ENCODE measurements at regions of chr3 and their contacts with region 1.

Region 1: DNA sequence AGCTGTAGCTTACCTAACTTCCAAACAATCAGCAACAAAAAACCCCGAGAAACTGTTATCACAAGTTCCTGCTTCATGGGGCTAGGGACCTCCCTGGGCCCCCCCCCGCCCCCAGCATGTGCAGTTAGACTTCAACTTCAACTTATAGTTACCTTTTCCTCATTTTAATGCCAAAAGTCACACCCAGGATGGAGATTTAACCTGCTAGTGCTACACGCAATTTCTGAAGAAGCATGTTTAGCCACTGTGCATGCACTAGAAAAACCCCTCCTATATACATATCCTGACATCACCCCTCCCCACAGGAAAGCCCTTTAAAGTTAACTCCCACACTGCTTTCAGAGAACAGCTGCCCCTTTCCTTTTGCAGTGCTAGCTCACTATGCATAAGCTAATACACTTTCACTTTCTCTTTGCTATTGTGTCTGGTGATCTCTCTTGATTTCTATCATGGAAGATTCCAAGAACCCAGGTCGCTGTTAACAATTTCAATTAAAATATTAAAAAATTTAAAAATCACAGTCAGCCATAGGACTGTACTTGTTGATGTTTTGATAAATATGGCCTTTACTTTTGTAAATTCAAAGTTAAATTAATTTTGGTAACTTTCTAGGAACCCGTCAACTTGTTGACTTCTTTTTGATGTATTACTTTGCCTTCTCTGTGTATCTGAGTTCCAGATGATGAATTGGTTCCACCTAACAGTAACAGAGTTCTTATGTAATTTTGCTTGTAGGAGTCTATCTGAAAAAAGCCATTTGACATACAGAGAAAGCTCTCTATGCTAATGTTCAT is 75.2 kb upstream of the ACAD9 start:
- DNase-seq: peak in 8 of 9 donors; percentile 54 to 88 (median 84)
- ATAC-seq: peak; percentile 92
- H3K4me3 ChIP-seq: peak overlapping the region; percentile 49
- H3K4me3 Mint-ChIP-seq: peak overlapping the region; percentile 48 to 89 (median 80)
- H3K27ac ChIP-seq: peak overlapping the region; percentile 74
- H3K27ac Mint-ChIP-seq: peak overlapping the region; percentile 91 to 98 (median 96)
- H3K4me1 ChIP-seq: peaks cover 22 to 64% of the 10 kb centered on the region in 2 donors
- H3K4me1 Mint-ChIP-seq: peaks cover 59 to 91% (median 85%) of the 10 kb centered on the region in 7 donors
- H3K27me3 ChIP-seq: no peaks in the 10 kb centered on the region
- H3K27me3 Mint-ChIP-seq: no peaks in the 10 kb centered on the region

Region 2: DNA sequence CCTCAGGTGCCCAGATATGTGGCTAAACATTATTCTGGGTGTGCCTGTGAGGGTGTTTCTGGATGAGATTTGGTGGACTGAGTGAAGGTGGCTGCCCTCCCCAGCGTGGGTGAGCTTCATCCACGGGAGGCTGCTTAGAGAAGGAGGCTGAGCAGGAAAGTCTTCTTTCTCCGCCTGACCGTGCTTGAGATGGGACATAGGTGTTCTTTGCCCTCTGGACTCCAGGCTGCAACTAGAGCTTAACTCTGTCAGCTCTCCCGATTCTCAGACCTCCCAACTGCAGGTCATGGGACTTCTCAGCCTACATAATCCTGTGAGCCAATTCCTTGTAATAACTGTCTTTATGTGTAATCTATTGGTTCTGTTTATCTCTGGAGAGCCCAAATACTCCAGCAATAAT is 44.2 kb before region 1 on chr3:
- CTCF ChIA-PET with region 1: no interaction called
- POLR2A ChIA-PET with region 1: no interaction called
- intact Hi-C with region 1: no loop called
- DNase-seq: no peak
- ATAC-seq: no peak
- H3K4me3 ChIP-seq: no peak overlapping the region
- H3K4me3 Mint-ChIP-seq: peak overlapping the region in 4 of 10 donors; percentile 12 to 47 (median 38)
- H3K27ac ChIP-seq: no peak overlapping the region
- H3K27ac Mint-ChIP-seq: peak overlapping the region in 6 of 9 donors; percentile 43 to 79 (median 74)
- H3K4me1 ChIP-seq: peaks cover 14 to 16% of the 10 kb centered on the region in 2 donors
- H3K4me1 Mint-ChIP-seq: peaks cover 41 to 82% (median 70%) of the 10 kb centered on the region in 7 donors
- H3K27me3 ChIP-seq: no peaks in the 10 kb centered on the region
- H3K27me3 Mint-ChIP-seq: no peaks in the 10 kb centered on the region

Region 3: GRCh38 chr3:128922804-128923459 is 118.7 kb after region 1 on chr3:
- CTCF ChIA-PET with region 1: no interaction called
- POLR2A ChIA-PET with region 1: interaction called, 4 read pairs
- intact Hi-C with region 1: loop called (anchors 1 to 5 kb)
- DNase-seq: peak in 8 of 9 donors; percentile 60 to 73 (median 69)
- ATAC-seq: peak; percentile 73
- H3K4me3 ChIP-seq: peak overlapping the region; percentile 41
- H3K4me3 Mint-ChIP-seq: peak overlapping the region; percentile 75 to 87 (median 84)
- H3K27ac ChIP-seq: peak overlapping the region; percentile 63
- H3K27ac Mint-ChIP-seq: peak overlapping the region; percentile 75 to 96 (median 89)
- H3K4me1 ChIP-seq: peaks cover 13 to 23% of the 10 kb centered on the region in 2 donors
- H3K4me1 Mint-ChIP-seq: peaks cover 20 to 66% (median 52%) of the 10 kb centered on the region in 7 donors
- H3K27me3 ChIP-seq: no peaks in the 10 kb centered on the region
- H3K27me3 Mint-ChIP-seq: peaks cover 0 to 3% (median 0%) of the 10 kb centered on the region in 5 donors

Measured in naive thymus-derived CD4-positive, alpha-beta T cell (primary cell).